ENCODE measurements at regions of chrX and their contacts with region 1.

Region 1: GRCh38 chrX:48737213-48737938 is 24.2 kb upstream of the GLOD5 start:
- DNase-seq: peak; percentile 92
- ATAC-seq: peak; percentile 96
- H3K4me3 Mint-ChIP-seq: peak overlapping the region; percentile 97
- H3K27ac Mint-ChIP-seq: peak overlapping the region; percentile 99
- H3K4me1 Mint-ChIP-seq: peaks cover 20% of the 10 kb centered on the region
- H3K27me3 Mint-ChIP-seq: no peaks in the 10 kb centered on the region

Region 2: DNA sequence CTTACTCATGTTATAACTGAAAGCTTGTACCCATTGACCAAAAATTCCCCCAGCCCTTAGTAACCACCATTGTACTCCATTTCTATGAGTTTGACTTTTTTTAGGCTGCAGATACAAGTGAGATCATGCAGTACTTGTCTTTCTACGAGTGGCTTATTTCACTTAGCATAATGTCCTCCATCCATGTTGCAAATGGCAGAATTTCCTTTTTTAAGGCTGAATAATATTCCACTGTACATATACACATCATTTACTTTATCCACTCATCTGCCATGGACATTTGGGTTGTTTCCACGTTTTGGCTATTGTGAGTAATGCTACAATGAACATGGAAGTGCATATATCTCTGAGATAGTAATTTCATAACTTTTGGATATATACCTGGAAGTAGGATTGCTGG is 152.7 kb before region 1 on chrX:
- CTCF ChIA-PET with region 1: no interaction called
- POLR2A ChIA-PET with region 1: no interaction called
- intact Hi-C with region 1: no loop called
- DNase-seq: no peak
- ATAC-seq: no peak
- H3K4me3 Mint-ChIP-seq: no peak overlapping the region
- H3K27ac Mint-ChIP-seq: no peak overlapping the region
- H3K4me1 Mint-ChIP-seq: no peaks in the 10 kb centered on the region
- H3K27me3 Mint-ChIP-seq: no peaks in the 10 kb centered on the region

Region 3: DNA sequence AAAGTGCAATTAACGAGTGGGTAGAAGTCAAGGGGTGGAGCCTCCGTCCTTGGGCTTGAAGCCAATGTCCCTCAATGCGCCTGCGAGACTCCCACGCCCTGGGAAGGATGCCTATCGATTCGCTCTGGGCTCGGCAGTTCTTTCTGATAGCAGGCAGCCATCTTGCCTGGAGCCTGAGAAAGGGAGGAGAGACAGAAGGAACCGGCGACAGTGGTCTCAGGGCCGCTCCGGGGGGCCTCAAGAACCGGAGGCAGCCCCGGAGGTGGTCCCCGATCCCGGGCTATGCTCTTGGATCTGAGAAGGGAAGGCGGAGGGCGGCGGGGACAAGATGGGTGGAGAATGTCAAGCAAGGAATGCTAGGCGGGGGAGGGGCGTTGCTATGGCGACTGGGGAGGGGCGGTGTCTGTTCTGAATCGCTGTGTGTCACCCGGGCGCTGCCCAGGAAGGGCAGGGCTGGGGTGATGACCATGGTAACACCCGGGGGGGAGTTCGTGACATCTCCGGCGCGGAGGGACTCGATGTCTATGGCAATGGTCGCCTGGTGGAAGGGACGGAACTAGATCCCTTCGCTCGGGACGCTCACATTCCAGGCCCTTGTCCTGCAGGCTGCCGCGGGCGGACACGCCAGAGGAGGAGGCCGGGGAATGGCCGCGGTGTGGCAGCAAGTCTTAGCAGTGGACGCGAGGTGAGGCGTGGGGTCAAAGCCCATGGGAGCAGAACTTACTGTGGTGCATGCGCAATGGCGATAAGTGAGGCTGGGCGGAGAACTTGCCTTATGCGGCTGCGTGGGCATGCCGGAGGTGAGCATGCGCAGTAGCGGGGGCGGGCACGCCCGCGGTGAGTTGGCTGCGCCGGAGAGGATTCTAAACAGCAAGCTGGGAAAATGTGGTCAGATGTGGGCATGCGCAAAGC is 139.8 kb before region 1 on chrX and contains the start of gene WDR13:
- CTCF ChIA-PET with region 1: interaction called, 3 read pairs
- POLR2A ChIA-PET with region 1: no interaction called
- intact Hi-C with region 1: loop called in 1 of 2 experiments (anchors 5 kb)
- DNase-seq: peak; percentile 94
- ATAC-seq: peak; percentile 91
- H3K4me3 Mint-ChIP-seq: peak within 1 kb of the TSS; percentile 99
- H3K27ac Mint-ChIP-seq: peak within 1 kb of the TSS; percentile 98
- H3K4me1 Mint-ChIP-seq: peaks cover 8% of the 10 kb centered on the region
- H3K27me3 Mint-ChIP-seq: no peaks in the 10 kb centered on the region
- total RNA-seq, gene WDR13: 27.2 to 39.4 TPM

Region 4: DNA sequence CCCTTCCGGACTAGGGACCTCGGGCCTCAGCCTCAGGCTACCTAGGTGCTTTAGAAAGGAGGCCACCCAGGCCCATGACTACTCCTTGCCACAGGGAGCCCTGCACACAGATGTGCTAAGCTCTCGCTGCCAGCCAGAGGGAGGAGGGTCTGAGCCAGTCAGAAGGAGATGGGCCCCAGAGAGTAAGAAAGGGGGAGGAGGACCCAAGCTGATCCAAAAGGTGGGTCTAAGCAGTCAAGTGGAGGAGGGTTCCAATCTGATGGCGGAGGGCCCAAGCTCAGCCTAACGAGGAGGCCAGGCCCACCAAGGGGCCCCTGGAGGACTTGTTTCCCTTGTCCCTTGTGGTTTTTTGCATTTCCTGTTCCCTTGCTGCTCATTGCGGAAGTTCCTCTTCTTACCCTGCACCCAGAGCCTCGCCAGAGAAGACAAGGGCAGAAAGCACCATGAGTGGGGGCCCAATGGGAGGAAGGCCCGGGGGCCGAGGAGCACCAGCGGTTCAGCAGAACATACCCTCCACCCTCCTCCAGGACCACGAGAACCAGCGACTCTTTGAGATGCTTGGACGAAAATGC is 53.9 kb before region 1 on chrX and contains the start of gene WAS:
- CTCF ChIA-PET with region 1: no interaction called
- POLR2A ChIA-PET with region 1: interaction called, 4 read pairs
- intact Hi-C with region 1: loop called in 1 of 2 experiments (anchors 5 kb)
- DNase-seq: peak; percentile 68
- ATAC-seq: peak; percentile 85
- H3K4me3 Mint-ChIP-seq: peak within 1 kb of the TSS; percentile 93
- H3K27ac Mint-ChIP-seq: peak within 1 kb of the TSS; percentile 96
- H3K4me1 Mint-ChIP-seq: peaks cover 49% of the 10 kb centered on the region
- H3K27me3 Mint-ChIP-seq: no peaks in the 10 kb centered on the region
- total RNA-seq, gene WAS: 85.9 to 102 TPM

Region 5: GRCh38 chrX:48751343-48751742 is 14.0 kb after region 1 on chrX:
- CTCF ChIA-PET with region 1: interaction called, 3 read pairs
- POLR2A ChIA-PET with region 1: interaction called, 3 read pairs
- intact Hi-C with region 1: loop called in 1 of 2 experiments (anchors 1 kb)
- DNase-seq: peak; percentile 40
- ATAC-seq: peak; percentile 97
- H3K4me3 Mint-ChIP-seq: no peak overlapping the region
- H3K27ac Mint-ChIP-seq: no peak overlapping the region
- H3K4me1 Mint-ChIP-seq: peaks cover 7% of the 10 kb centered on the region
- H3K27me3 Mint-ChIP-seq: no peaks in the 10 kb centered on the region

Region 6: GRCh38 chrX:48897621-48898306 is 160.4 kb after region 1 on chrX and contains the starts of genes PQBP1 and TIMM17B:
- CTCF ChIA-PET with region 1: no interaction called
- POLR2A ChIA-PET with region 1: no interaction called
- intact Hi-C with region 1: loop called in 1 of 2 experiments (anchors 5 kb)
- DNase-seq: peak; percentile 92
- ATAC-seq: peak; percentile 94
- H3K4me3 Mint-ChIP-seq: peak within 1 kb of the TSS; percentile 81
- H3K27ac Mint-ChIP-seq: peak within 1 kb of the TSS; percentile 94
- H3K4me1 Mint-ChIP-seq: peaks cover 19% of the 10 kb centered on the region
- H3K27me3 Mint-ChIP-seq: no peaks in the 10 kb centered on the region
- total RNA-seq, gene PQBP1: 73.4 to 75.3 TPM
- total RNA-seq, gene TIMM17B: 54.2 to 58.9 TPM

Region 7: GRCh38 chrX:48957827-48958634 is 220.7 kb after region 1 on chrX:
- CTCF ChIA-PET with region 1: no interaction called
- POLR2A ChIA-PET with region 1: no interaction called
- intact Hi-C with region 1: loop called in 1 of 2 experiments (anchors 1 kb)
- DNase-seq: peak; percentile 95
- ATAC-seq: peak; percentile 92
- H3K4me3 Mint-ChIP-seq: peak overlapping the region; percentile 93
- H3K27ac Mint-ChIP-seq: peak overlapping the region; percentile 100
- H3K4me1 Mint-ChIP-seq: peaks cover 28% of the 10 kb centered on the region
- H3K27me3 Mint-ChIP-seq: no peaks in the 10 kb centered on the region